Mammary epithelial cell (primary cell): ENCODE measurements at regions of chr4 and their contacts with region 1.

Region 1: GRCh38 chr4:1519787-1520661 is 113.8 kb upstream of the NKX1-1 start:
- DNase-seq: no peak
- H3K4me3 ChIP-seq: no peak overlapping the region
- H3K27ac ChIP-seq: no peak overlapping the region
- H3K4me1 ChIP-seq: no peaks in the 10 kb centered on the region
- H3K27me3 ChIP-seq: peaks cover 21% of the 10 kb centered on the region
- CTCF ChIP-seq: no peak

Region 2: DNA sequence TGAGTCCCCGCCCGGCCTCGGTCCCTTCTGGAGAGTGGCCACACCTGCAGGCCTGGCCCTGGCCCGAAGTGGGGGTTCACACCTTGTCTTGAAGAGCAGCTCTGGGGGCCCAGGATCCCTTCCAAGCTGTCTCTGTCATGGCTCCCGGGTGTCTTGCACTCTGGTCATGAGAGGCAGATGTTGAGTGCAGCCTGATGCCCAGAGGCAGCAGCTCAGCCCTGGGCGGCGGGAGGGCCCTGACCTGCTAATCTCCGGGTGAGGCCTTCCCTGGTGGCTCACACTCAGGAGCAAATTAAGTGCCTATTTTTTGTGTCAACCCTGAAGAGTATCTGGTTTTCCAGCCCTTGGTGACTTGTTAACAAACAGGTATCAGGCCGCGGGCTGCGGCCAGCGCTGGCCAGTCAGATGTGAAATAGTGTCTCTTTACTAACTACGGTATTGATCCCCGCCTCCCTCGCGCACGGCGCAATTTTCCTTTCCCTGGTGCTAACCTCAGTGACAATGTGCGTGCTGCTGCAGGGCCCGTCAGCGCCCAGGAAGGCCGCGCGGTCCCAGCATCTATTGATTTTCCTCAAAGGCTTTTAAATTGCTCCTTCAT is 138.0 kb before region 1 on chr4:
- CTCF ChIA-PET with region 1: no interaction called
- dilution Hi-C with region 1: no loop called
- in situ Hi-C with region 1: no loop called
- intact Hi-C with region 1: no loop called
- DNase-seq: no peak
- H3K4me3 ChIP-seq: no peak overlapping the region
- H3K27ac ChIP-seq: no peak overlapping the region
- H3K4me1 ChIP-seq: no peaks in the 10 kb centered on the region
- H3K27me3 ChIP-seq: no peaks in the 10 kb centered on the region
- CTCF ChIP-seq: no peak

Region 3: GRCh38 chr4:1403591-1404572 is 116.1 kb before region 1 on chr4:
- CTCF ChIA-PET with region 1: no interaction called
- dilution Hi-C with region 1: no loop called
- in situ Hi-C with region 1: no loop called
- intact Hi-C with region 1: no loop called
- DNase-seq: no peak
- H3K4me3 ChIP-seq: no peak overlapping the region
- H3K27ac ChIP-seq: no peak overlapping the region
- H3K4me1 ChIP-seq: no peaks in the 10 kb centered on the region
- H3K27me3 ChIP-seq: peaks cover 76% of the 10 kb centered on the region
- CTCF ChIP-seq: no peak

Region 4: GRCh38 chr4:1463088-1463926 is 56.7 kb before region 1 on chr4:
- CTCF ChIA-PET with region 1: no interaction called
- dilution Hi-C with region 1: no loop called
- in situ Hi-C with region 1: no loop called
- intact Hi-C with region 1: no loop called
- DNase-seq: no peak
- H3K4me3 ChIP-seq: no peak overlapping the region
- H3K27ac ChIP-seq: no peak overlapping the region
- H3K4me1 ChIP-seq: no peaks in the 10 kb centered on the region
- H3K27me3 ChIP-seq: peaks cover 12% of the 10 kb centered on the region
- CTCF ChIP-seq: no peak

Region 5: DNA sequence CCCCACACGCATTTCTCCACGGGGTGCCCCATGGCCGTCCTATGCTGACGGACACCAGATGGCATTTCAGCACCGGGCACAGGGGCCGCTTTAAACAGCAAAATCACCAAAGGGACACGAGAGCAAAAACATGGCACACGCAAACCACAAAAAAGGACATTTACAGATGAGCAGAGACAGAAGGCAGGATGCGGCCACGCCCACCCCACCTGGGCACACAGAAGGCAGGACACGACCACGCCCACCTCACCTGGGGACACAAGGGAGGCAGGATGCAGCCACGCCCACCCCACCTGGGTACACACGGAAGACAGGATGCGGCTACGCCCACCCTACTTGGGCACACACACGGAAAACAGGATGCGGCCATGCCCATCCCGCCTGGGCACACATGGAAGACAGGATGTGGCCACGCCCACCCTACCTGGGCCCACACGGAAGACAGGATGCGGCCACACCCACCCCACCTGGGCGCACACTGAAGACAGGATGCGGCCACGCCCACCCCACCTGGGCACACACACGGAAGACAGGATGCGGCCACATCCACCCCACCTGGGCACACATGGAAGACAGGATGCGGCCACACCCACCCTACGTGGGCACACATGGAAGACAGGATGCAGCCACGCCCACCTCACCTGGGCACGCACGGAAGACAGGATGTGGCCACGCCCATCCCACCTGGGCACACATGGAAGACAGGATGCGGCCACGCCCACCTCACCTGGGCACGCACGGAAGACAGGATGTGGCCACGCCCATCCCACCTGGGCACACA is 95.0 kb after region 1 on chr4:
- CTCF ChIA-PET with region 1: no interaction called
- dilution Hi-C with region 1: loop called (anchors 5 kb)
- in situ Hi-C with region 1: no loop called
- intact Hi-C with region 1: no loop called
- DNase-seq: no peak
- H3K4me3 ChIP-seq: no peak overlapping the region
- H3K27ac ChIP-seq: no peak overlapping the region
- H3K4me1 ChIP-seq: peaks cover 8% of the 10 kb centered on the region
- H3K27me3 ChIP-seq: no peaks in the 10 kb centered on the region
- CTCF ChIP-seq: no peak

Region 6: GRCh38 chr4:1767770-1768366 is 247.8 kb after region 1 on chr4:
- CTCF ChIA-PET with region 1: no interaction called
- dilution Hi-C with region 1: no loop called
- in situ Hi-C with region 1: no loop called
- intact Hi-C with region 1: no loop called
- DNase-seq: no peak
- H3K4me3 ChIP-seq: peak overlapping the region in 1 of 3 experiments; percentile 16
- H3K27ac ChIP-seq: no peak overlapping the region
- H3K4me1 ChIP-seq: peaks cover 14% of the 10 kb centered on the region
- H3K27me3 ChIP-seq: no peaks in the 10 kb centered on the region
- CTCF ChIP-seq: no peak